IMR-90 (cell line): ENCODE measurements at regions of chr2 and their contacts with region 1.

Region 1: DNA sequence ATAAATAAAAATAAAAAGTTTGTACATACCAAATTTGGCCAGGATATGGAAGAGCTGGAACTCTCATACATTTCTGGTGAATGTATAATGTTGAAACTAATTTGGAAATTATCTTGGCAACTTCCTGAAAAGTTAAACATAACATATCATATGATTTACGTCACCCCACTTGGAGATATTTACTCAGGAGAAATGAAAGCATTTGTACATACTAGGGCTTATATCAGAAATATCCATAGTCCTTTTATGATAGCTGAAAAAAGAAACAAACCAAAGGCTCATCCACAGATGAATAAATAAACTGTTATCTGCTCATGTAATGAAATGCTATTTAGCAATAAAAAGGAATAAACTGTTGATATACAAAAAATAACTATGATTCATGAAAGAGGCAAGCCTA is 318.2 kb upstream of the NRXN1 start:
- DNase-seq: peak; percentile 91
- ATAC-seq: peak; percentile 95
- H3K4me3 ChIP-seq: no peak overlapping the region
- H3K27ac ChIP-seq: peak overlapping the region; percentile 100; the same call in 1 of the 2 replicates
- H3K4me1 ChIP-seq: peaks cover 2% of the 10 kb centered on the region; the same call in 1 of the 2 replicates
- H3K27me3 ChIP-seq: no peaks in the 10 kb centered on the region
- CTCF ChIP-seq: no peak
- POLR2A ChIP-seq: no peak
- RAD21 ChIP-seq: no peak

Region 2: DNA sequence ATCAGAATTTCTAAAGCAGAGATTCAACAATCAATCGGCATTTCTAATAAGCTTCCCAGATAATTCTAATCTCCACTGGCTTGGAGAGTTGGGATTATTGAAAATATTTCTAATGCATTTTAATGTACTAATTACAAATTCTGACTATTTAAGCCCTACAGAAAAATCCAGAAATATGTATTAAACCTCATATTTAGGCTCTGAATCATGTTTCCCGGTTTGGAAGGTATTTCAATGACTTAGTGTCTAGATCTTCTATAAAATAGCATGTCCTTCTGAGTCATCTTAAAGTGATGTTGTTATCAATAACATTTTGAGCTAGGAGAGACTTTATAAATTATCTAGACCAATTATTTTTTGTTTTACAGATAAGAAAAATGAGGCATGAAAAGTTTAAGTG is 59.4 kb before region 1 on chr2:
- CTCF ChIA-PET with region 1: no interaction called
- POLR2A ChIA-PET with region 1: no interaction called
- dilution Hi-C with region 1: no loop called
- in situ Hi-C with region 1: no loop called
- intact Hi-C with region 1: no loop called
- DNase-seq: peak; percentile 72
- ATAC-seq: peak; percentile 68
- H3K4me3 ChIP-seq: no peak overlapping the region
- H3K27ac ChIP-seq: no peak overlapping the region
- H3K4me1 ChIP-seq: no peaks in the 10 kb centered on the region
- H3K27me3 ChIP-seq: no peaks in the 10 kb centered on the region
- CTCF ChIP-seq: no peak
- POLR2A ChIP-seq: no peak
- RAD21 ChIP-seq: no peak

Region 3: DNA sequence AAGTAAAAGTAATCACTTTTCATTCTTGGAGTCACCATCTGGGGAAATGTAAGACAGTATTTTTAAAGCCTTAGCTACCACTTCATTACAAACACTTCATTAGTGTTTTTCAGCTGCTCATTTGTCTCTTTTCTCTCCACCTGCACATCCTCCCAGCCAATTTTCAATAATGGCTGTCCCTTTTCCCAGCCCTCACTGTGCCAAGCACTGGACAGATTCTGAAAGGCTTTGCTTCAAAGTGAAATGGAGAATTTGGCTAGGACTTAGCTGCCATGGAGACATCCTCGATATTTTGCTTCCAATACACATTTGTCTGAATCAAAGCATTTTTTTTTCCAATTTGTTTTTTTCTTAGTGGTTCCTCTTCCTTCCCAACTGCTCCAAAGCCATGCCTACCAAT is 45.8 kb before region 1 on chr2:
- CTCF ChIA-PET with region 1: no interaction called
- POLR2A ChIA-PET with region 1: no interaction called
- dilution Hi-C with region 1: no loop called
- in situ Hi-C with region 1: no loop called
- intact Hi-C with region 1: no loop called
- DNase-seq: no peak
- ATAC-seq: no peak
- H3K4me3 ChIP-seq: no peak overlapping the region
- H3K27ac ChIP-seq: no peak overlapping the region
- H3K4me1 ChIP-seq: no peaks in the 10 kb centered on the region
- H3K27me3 ChIP-seq: no peaks in the 10 kb centered on the region
- CTCF ChIP-seq: no peak
- POLR2A ChIP-seq: no peak
- RAD21 ChIP-seq: no peak

Region 4: DNA sequence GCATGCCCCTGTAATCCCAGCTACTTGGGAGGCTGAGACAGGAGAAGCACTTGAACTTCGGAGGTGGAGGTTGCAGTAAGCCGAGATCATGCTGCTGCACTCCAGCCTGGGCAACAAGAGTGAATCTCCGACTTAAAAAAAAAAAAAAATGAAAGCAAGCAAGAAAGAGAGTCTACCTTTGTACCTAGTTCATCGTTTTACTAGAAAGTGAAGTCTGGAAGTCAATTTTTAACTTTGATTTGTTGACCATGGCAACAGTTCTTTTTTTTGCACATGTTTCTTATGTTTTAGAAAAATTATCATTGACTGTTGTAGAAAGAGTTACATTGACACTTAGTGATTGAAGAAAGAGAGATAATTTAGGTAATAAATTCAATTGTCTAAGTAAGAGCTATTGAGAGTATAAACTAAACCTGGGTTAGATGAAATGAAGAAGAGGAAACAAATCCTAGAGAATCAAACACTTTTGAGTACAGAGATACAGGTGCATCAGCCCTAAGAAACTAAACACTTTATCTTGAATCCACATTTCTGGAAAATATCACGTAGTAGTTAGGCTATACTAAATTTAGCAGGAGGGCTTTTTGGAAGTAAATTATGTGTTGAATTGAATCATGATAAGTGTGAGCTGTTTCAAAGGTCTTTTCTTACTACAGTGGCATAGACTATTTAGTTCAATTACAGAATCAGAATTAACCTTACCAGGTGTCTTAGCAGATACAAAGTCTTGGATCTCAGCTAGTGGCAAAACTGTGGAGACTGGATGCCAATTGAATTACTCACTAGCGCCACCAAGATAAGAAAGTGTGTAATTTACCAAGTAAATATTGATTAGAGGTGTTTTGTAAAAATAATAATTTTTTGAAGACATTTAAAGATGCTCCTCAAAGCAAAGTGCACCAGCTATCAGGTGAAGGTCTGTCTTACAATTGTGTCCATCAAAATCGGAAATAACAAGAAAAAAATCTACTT is 14.7 kb before region 1 on chr2:
- CTCF ChIA-PET with region 1: no interaction called
- POLR2A ChIA-PET with region 1: no interaction called
- dilution Hi-C with region 1: no loop called
- in situ Hi-C with region 1: no loop called
- intact Hi-C with region 1: no loop called
- DNase-seq: no peak
- ATAC-seq: no peak
- H3K4me3 ChIP-seq: no peak overlapping the region
- H3K27ac ChIP-seq: no peak overlapping the region
- H3K4me1 ChIP-seq: no peaks in the 10 kb centered on the region
- H3K27me3 ChIP-seq: no peaks in the 10 kb centered on the region
- CTCF ChIP-seq: no peak
- POLR2A ChIP-seq: no peak
- RAD21 ChIP-seq: no peak

Region 5: DNA sequence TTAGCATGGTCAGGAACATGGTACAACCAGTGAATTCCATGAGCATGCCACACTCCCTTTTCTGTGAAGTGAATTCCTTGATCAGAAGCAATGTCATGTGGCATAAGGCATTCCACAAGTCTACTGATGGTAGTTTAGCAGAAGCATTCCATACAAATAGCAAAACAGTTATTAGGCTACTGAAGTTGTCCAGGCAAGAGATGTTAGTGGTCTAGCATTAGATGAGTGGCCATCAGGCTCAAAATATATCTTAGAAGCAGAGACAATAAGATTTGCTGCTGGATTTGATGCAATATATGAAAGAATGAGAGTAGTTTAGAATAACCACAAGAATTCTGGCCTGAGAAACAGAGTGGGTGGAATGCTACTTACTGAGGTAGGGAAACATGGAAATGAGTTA is 37.1 kb after region 1 on chr2:
- CTCF ChIA-PET with region 1: no interaction called
- POLR2A ChIA-PET with region 1: no interaction called
- dilution Hi-C with region 1: no loop called
- in situ Hi-C with region 1: no loop called
- intact Hi-C with region 1: loop called (anchors 2 kb)
- DNase-seq: peak; percentile 92
- ATAC-seq: peak; percentile 92
- H3K4me3 ChIP-seq: no peak overlapping the region
- H3K27ac ChIP-seq: peak overlapping the region; percentile 45; the same call in 1 of the 2 replicates
- H3K4me1 ChIP-seq: peaks cover 4% of the 10 kb centered on the region; the same call in 1 of the 2 replicates
- H3K27me3 ChIP-seq: no peaks in the 10 kb centered on the region
- CTCF ChIP-seq: no peak
- POLR2A ChIP-seq: no peak
- RAD21 ChIP-seq: no peak